ENCODE measurements at regions of chr13 and their contacts with region 1.

Region 1: GRCh38 chr13:37058910-37059847 is at the start of gene SUPT20H:
- DNase-seq: peak; percentile 93
- H3K4me3 ChIP-seq: peak within 1 kb of the TSS; percentile 71
- H3K27ac ChIP-seq: peak within 1 kb of the TSS; percentile 59
- H3K4me1 ChIP-seq: peaks cover 12% of the 10 kb centered on the region
- CTCF ChIP-seq: no peak
- total RNA-seq, gene SUPT20H: 48.3 and 53.0 TPM in 2 replicates

Region 2: GRCh38 chr13:36115285-36115684 is 943.9 kb before region 1 on chr13:
- CTCF ChIA-PET with region 1: no interaction called
- POLR2A ChIA-PET with region 1: no interaction called
- intact Hi-C with region 1: no loop called
- DNase-seq: no peak
- H3K4me3 ChIP-seq: no peak overlapping the region
- H3K27ac ChIP-seq: no peak overlapping the region
- H3K4me1 ChIP-seq: no peaks in the 10 kb centered on the region
- CTCF ChIP-seq: no peak

Region 3: DNA sequence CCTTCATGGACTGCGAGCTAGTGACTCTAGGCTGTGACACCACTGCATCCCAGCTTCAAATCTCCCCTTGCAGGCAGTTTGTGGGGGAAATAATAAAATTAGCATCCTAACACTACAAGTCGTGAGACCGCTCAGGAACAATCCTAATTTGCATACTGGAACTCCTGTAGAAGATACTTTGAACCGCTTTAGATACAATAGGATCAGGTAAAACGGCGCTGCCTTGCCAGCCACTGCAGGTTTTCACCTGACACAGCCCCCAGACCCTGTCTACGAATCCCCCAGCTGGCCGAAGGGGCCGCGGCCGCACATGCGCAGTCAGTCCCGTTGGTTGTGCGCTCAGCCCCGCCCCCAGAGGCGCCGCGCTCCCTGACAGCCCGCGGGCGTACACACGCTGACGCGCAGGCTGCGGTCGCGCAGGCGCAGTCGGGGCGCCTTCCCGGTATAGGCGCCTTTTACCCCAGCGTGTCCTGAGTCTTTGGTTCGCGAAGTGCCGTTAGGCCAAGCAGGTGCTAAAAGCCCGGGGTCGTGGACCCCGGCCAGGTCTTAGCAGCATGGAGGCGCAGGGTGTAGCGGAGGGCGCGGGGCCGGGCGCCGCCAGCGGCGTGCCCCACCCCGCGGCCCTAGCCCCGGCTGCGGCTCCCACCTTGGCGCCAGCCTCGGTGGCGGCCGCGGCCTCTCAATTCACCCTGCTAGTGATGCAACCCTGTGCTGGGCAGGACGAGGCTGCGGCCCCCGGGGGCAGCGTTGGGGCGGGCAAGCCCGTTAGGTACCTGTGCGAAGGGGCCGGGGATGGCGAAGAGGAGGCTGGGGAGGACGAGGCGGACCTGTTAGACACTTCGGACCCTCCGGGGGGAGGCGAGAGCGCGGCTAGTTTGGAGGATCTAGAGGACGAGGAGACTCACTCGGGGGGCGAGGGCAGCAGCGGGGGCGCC is 240.1 kb before region 1 on chr13 and contains the start of gene RFXAP:
- CTCF ChIA-PET with region 1: no interaction called
- POLR2A ChIA-PET with region 1: no interaction called
- intact Hi-C with region 1: loop called (anchors 2 kb)
- DNase-seq: peak; percentile 96
- H3K4me3 ChIP-seq: peak within 1 kb of the TSS; percentile 77
- H3K27ac ChIP-seq: peak within 1 kb of the TSS; percentile 63
- H3K4me1 ChIP-seq: peaks cover 32% of the 10 kb centered on the region
- CTCF ChIP-seq: no peak
- total RNA-seq, gene RFXAP: 10.0 and 11.8 TPM in 2 replicates

Region 4: DNA sequence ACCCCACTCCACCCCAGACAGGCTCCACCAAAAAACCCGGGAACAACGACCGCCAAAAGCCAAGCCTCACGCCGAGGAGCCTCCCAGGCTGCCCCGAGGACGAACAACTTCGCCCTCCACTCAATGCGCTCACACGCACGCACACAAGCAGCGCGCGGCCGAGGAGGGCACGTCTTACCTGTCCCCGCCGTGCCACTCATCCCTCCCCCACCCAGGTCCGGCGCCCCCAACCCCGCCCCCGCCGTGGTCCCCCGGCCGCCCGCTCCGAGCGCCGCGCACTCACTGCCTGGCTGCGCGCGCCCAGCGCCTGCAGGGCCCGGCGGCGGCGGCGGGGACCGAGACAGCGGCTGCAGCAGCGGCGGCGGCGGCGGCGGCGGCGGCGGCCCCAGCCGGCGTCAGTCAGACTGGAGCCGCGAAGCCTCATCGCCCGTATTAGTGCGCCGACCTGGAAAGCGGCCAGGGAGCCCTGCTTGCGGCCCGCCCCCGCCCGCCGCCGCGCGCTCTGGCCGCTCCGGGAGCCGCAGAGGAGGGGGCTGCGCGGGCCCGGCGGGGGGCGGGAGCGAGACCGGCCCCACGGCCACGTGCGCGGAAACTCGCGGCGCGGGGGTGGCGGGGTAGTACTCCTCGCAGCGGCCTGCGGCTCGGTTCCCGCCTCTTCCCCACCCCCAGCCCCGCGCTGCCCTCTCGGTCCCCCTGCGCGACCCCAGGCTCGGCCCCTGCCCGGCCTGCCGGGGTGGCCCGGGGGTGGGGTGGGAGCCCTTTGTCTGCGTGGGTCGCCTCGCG is 139.2 kb before region 1 on chr13 and contains the start of gene SMAD9:
- CTCF ChIA-PET with region 1: no interaction called
- POLR2A ChIA-PET with region 1: no interaction called
- intact Hi-C with region 1: loop called (anchors 5 kb)
- DNase-seq: peak; percentile 73
- H3K4me3 ChIP-seq: peak within 1 kb of the TSS; percentile 84
- H3K27ac ChIP-seq: peak within 1 kb of the TSS; percentile 79
- H3K4me1 ChIP-seq: peaks cover 85% of the 10 kb centered on the region
- CTCF ChIP-seq: no peak
- total RNA-seq, gene SMAD9: 9.7 and 10.8 TPM in 2 replicates

Region 5: GRCh38 chr13:36981156-36981743 is 77.9 kb before region 1 on chr13:
- CTCF ChIA-PET with region 1: no interaction called
- POLR2A ChIA-PET with region 1: no interaction called
- intact Hi-C with region 1: no loop called
- DNase-seq: peak; percentile 76
- H3K4me3 ChIP-seq: no peak overlapping the region
- H3K27ac ChIP-seq: peak overlapping the region; percentile 31
- H3K4me1 ChIP-seq: peaks cover 17% of the 10 kb centered on the region
- CTCF ChIP-seq: peak; percentile 92

Region 6: DNA sequence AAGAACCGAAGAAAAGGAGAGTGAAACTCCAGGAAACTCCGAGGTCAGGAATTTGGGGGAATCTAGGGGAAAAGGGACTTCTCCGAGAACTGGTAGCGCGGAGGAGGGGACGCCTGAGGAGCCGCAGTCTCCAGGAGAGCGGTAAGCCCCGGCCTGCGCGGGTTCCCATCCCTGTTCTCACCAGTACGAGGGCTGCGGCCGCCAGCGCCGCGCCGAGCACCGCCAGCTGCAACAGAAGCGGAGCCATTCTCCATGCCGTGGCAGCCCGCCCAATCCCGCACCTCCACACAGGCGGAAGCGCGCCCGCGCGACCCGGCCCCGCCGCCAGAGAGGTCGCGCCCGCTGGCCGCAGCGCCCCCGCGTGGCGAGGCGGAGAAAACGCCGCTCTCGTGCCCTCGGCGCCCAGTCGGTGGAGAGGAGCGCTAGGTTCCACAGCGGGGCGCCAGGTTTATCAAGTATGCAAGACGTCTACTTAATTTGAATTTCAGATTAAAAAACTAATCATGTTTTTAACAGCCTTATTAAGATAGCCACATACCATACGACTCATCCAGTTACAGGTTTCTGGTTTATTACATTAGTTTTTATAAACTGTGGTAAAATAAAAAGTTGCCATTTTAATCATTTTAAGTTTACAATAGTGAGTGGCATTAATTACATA is 60.0 kb before region 1 on chr13 and contains the start of gene ALG5:
- CTCF ChIA-PET with region 1: no interaction called
- POLR2A ChIA-PET with region 1: interaction called, 4 read pairs
- intact Hi-C with region 1: loop called (anchors 1 kb)
- DNase-seq: peak; percentile 93
- H3K4me3 ChIP-seq: peak within 1 kb of the TSS; percentile 98
- H3K27ac ChIP-seq: peak within 1 kb of the TSS; percentile 91
- H3K4me1 ChIP-seq: peaks cover 26% of the 10 kb centered on the region
- CTCF ChIP-seq: peak; percentile 99
- total RNA-seq, gene ALG5: 23.8 and 25.3 TPM in 2 replicates

Region 7: DNA sequence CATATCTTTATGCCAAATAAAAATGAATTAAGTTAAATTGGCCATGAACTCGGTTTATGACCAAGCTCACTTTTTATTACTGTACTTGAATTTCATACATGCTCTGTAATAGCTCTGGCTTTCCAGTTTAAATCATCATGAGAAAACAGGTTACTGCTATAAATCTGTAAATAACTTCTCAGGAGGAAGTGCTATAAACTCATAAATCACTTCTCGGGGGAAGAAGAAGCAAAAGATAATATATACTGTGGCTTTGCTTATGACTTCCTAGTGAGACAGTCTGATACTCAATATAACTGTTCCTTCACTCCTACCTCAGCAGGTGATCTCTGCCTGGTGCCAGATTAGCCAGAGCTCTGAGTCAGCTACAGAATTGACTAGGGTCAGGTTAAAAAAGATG is 12.1 kb before region 1 on chr13:
- CTCF ChIA-PET with region 1: no interaction called
- POLR2A ChIA-PET with region 1: interaction called, 17 read pairs
- intact Hi-C with region 1: no loop called
- DNase-seq: no peak
- H3K4me3 ChIP-seq: no peak overlapping the region
- H3K27ac ChIP-seq: no peak overlapping the region
- H3K4me1 ChIP-seq: peaks cover 4% of the 10 kb centered on the region
- CTCF ChIP-seq: no peak

Region 8: DNA sequence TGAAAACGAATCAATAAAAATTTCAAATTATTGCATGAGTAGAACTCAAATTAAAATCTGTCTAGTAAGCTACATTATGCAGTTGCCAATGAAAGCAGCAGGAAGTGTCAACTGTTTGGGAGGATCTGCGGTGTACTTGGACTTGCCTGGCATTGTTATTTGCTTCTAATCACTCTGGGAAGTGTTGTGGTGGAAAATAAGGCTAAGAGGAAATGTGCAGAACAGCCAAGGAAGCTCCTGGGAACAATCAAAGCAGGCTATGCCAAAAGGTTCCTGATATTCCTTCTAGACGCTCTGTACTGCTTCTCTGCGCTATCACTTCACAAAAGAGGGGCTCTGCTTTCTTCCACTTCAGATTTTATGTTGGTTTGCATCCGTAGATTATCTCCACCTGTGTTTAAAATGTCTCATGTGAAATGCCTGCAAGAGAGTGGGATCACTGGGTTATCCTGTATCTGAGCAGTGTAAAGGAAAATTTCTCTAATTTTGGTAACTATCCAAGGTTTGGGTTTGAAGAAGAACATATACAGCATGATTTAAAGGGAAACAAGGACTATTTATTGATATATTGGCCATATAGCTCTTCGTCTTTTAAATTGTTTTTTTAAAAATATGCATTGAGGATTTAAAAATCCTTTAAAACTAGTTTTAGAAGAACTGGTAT is 229.0 kb after region 1 on chr13:
- CTCF ChIA-PET with region 1: no interaction called
- POLR2A ChIA-PET with region 1: no interaction called
- intact Hi-C with region 1: no loop called
- DNase-seq: no peak
- H3K4me3 ChIP-seq: no peak overlapping the region
- H3K27ac ChIP-seq: no peak overlapping the region
- H3K4me1 ChIP-seq: no peaks in the 10 kb centered on the region
- CTCF ChIP-seq: no peak

Region 9: GRCh38 chr13:39037880-39038568 is 1978.8 kb after region 1 on chr13 and contains the starts of genes NHLRC3 and PROSER1:
- CTCF ChIA-PET with region 1: no interaction called
- POLR2A ChIA-PET with region 1: no interaction called
- intact Hi-C with region 1: loop called (anchors 5 kb)
- DNase-seq: peak; percentile 97
- H3K4me3 ChIP-seq: peak within 1 kb of the TSS; percentile 93
- H3K27ac ChIP-seq: peak within 1 kb of the TSS; percentile 80
- H3K4me1 ChIP-seq: peaks cover 36% of the 10 kb centered on the region
- CTCF ChIP-seq: no peak
- total RNA-seq, gene NHLRC3: 26.8 and 28.6 TPM in 2 replicates
- total RNA-seq, gene PROSER1: 35.3 and 43.3 TPM in 2 replicates

Measured in OCI-LY7 (cell line).